ENCODE measurements at regions of chr4 and their contacts with region 1.

Region 1: DNA sequence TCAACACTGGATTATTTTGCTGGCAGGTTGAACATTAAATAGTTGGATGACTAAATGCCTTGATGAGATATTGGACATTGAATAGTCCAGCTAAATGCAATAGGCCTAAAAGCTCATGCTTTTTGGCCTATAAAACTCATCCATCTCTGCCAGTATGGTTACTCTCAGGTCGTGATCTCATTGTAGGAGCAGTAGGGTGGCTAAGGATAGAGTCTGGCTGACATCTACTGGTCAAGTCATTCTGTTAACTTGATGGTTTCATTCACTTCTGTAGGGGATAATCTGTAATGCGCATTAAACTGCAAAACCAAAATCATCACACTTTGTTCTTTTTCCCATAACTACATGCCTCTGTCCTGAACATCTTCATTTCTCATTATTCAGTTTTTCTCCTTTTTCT is 227.0 kb downstream of the DKK2 start:
- DNase-seq: peak; percentile 55
- ATAC-seq: peak; percentile 85
- H3K4me3 ChIP-seq: no peak overlapping the region
- H3K27ac ChIP-seq: no peak overlapping the region
- H3K4me1 ChIP-seq: no peaks in the 10 kb centered on the region; the same call in 1 of the 2 replicates
- H3K27me3 ChIP-seq: no peaks in the 10 kb centered on the region
- CTCF ChIP-seq: peak; percentile 65

Region 2: GRCh38 chr4:105306158-105306781 is 1502.8 kb before region 1 on chr4:
- CTCF ChIA-PET with region 1: no interaction called
- POLR2A ChIA-PET with region 1: no interaction called
- intact Hi-C with region 1: no loop called
- DNase-seq: peak; percentile 34
- ATAC-seq: peak; percentile 53
- H3K4me3 ChIP-seq: no peak overlapping the region
- H3K27ac ChIP-seq: no peak overlapping the region
- H3K4me1 ChIP-seq: no peaks in the 10 kb centered on the region
- H3K27me3 ChIP-seq: no peaks in the 10 kb centered on the region
- CTCF ChIP-seq: no peak

Region 3: GRCh38 chr4:106266201-106266600 is 542.9 kb before region 1 on chr4:
- CTCF ChIA-PET with region 1: no interaction called
- POLR2A ChIA-PET with region 1: no interaction called
- intact Hi-C with region 1: loop called (anchors 2 kb)
- DNase-seq: peak; percentile 55
- ATAC-seq: peak; percentile 38; the same call in 1 of the 2 replicates
- H3K4me3 ChIP-seq: no peak overlapping the region
- H3K27ac ChIP-seq: no peak overlapping the region
- H3K4me1 ChIP-seq: no peaks in the 10 kb centered on the region
- H3K27me3 ChIP-seq: no peaks in the 10 kb centered on the region
- CTCF ChIP-seq: peak; percentile 80

Region 4: GRCh38 chr4:106329041-106329618 is 479.9 kb before region 1 on chr4:
- CTCF ChIA-PET with region 1: interaction called, 4 read pairs
- POLR2A ChIA-PET with region 1: no interaction called
- intact Hi-C with region 1: loop called (anchors 1 kb)
- DNase-seq: peak; percentile 51
- ATAC-seq: peak; percentile 70
- H3K4me3 ChIP-seq: no peak overlapping the region
- H3K27ac ChIP-seq: no peak overlapping the region
- H3K4me1 ChIP-seq: no peaks in the 10 kb centered on the region
- H3K27me3 ChIP-seq: no peaks in the 10 kb centered on the region
- CTCF ChIP-seq: peak; percentile 67

Region 5: GRCh38 chr4:106369456-106370060 is 439.5 kb before region 1 on chr4:
- CTCF ChIA-PET with region 1: interaction called, 3 read pairs
- POLR2A ChIA-PET with region 1: no interaction called
- intact Hi-C with region 1: loop called (anchors 1 kb)
- DNase-seq: peak; percentile 73
- ATAC-seq: peak; percentile 56
- H3K4me3 ChIP-seq: no peak overlapping the region
- H3K27ac ChIP-seq: no peak overlapping the region
- H3K4me1 ChIP-seq: peaks cover 8% of the 10 kb centered on the region
- H3K27me3 ChIP-seq: no peaks in the 10 kb centered on the region
- CTCF ChIP-seq: peak; percentile 79

Region 6: DNA sequence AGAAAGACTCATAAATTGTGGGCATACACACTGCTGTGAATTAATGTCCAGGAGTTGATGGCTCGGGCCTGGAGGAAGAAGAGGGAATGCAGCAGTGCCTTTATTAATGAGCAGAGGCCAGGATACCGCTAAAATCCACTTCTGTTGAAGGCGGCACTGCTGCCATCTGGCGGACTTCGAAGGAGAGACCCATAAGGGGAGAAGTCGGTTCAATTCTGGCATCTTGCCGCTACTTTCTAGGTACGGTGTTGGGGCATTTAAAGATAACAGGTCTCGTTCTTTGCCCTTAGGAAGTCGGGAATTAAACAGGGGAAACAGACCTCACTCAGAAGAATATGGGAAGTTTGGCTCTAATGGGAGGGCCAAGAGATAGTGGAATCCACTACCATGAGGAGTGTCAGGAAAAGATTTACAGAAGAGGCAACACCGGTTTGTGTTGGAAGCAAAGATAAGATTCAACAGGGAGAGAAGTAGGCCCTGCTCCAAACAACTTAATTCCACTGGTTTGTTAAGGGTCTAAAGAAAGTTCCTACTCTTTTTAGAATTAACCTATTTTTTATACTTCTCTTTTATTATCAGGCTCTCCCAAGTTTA is 306.9 kb before region 1 on chr4:
- CTCF ChIA-PET with region 1: no interaction called
- POLR2A ChIA-PET with region 1: no interaction called
- intact Hi-C with region 1: loop called (anchors 1 kb)
- DNase-seq: peak; percentile 77
- ATAC-seq: peak; percentile 74
- H3K4me3 ChIP-seq: no peak overlapping the region
- H3K27ac ChIP-seq: no peak overlapping the region
- H3K4me1 ChIP-seq: no peaks in the 10 kb centered on the region
- H3K27me3 ChIP-seq: no peaks in the 10 kb centered on the region
- CTCF ChIP-seq: peak; percentile 80

Region 7: GRCh38 chr4:106583567-106583966 is 225.5 kb before region 1 on chr4:
- CTCF ChIA-PET with region 1: no interaction called
- POLR2A ChIA-PET with region 1: no interaction called
- intact Hi-C with region 1: loop called (anchors 10 kb)
- DNase-seq: peak; percentile 81
- ATAC-seq: peak; percentile 86
- H3K4me3 ChIP-seq: 0 out of 2 replicates have a peak overlapping the region, but pooled peaks have one; percentile 15
- H3K27ac ChIP-seq: peak overlapping the region; percentile 61
- H3K4me1 ChIP-seq: peaks cover 53% of the 10 kb centered on the region
- H3K27me3 ChIP-seq: no peaks in the 10 kb centered on the region
- CTCF ChIP-seq: no peak

Region 8: GRCh38 chr4:106690487-106690886 is 118.6 kb before region 1 on chr4:
- CTCF ChIA-PET with region 1: no interaction called
- POLR2A ChIA-PET with region 1: no interaction called
- intact Hi-C with region 1: loop called (anchors 5 kb)
- DNase-seq: peak; percentile 66
- ATAC-seq: peak; percentile 63
- H3K4me3 ChIP-seq: no peak overlapping the region
- H3K27ac ChIP-seq: no peak overlapping the region
- H3K4me1 ChIP-seq: 0 out of 2 replicates have a peak, but pooled peaks cover 9% of the 10 kb centered on the region
- H3K27me3 ChIP-seq: no peaks in the 10 kb centered on the region
- CTCF ChIP-seq: no peak

Measured in PC-3 (cell line).